Activated CD4-positive, alpha-beta T cell treated with anti-CD3 and anti-CD28 coated beads for 36 hours (primary cell): ENCODE measurements at regions of chr3 and their contacts with region 1.

Region 1: DNA sequence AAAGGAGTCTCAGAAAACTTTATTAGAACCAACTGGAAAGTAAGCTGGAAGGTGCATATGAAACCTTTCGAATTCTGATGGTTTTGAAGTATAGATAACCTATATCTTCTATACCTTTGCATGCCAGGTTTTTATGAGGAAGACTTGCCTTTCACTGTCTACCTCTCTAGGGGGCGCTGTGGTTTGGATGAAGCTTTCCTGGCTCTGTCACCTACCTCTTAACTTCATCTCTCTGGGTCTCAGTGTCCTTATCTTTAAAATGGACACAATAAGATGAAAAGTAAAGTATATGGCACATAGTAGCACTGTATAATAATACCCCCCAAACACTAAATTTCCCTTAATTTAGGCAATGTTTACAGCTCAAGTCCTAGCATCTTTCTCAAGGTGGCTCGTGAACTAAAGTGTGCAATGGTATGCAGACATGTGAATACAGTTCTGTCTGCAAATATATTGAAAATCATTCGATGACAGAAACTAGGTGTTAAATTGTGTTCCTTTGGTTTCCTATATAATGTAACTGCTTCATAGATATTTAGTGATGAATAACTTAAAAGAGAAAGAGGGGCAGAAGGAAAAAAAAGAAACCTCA is 314.3 kb downstream of the CHST2 start:
- DNase-seq: peak; percentile 63
- ATAC-seq: peak; percentile 53
- H3K4me3 Mint-ChIP-seq: no peak overlapping the region
- H3K27ac Mint-ChIP-seq: no peak overlapping the region
- H3K4me1 Mint-ChIP-seq: no peaks in the 10 kb centered on the region
- H3K27me3 Mint-ChIP-seq: no peaks in the 10 kb centered on the region

Region 2: GRCh38 chr3:142947799-142948575 is 485.9 kb before region 1 on chr3:
- CTCF ChIA-PET with region 1: no interaction called
- POLR2A ChIA-PET with region 1: no interaction called
- intact Hi-C with region 1: no loop called
- DNase-seq: peak; percentile 66
- ATAC-seq: peak; percentile 94
- H3K4me3 Mint-ChIP-seq: no peak overlapping the region
- H3K27ac Mint-ChIP-seq: no peak overlapping the region
- H3K4me1 Mint-ChIP-seq: peaks cover 19% of the 10 kb centered on the region
- H3K27me3 Mint-ChIP-seq: peaks cover 33% of the 10 kb centered on the region

Region 3: DNA sequence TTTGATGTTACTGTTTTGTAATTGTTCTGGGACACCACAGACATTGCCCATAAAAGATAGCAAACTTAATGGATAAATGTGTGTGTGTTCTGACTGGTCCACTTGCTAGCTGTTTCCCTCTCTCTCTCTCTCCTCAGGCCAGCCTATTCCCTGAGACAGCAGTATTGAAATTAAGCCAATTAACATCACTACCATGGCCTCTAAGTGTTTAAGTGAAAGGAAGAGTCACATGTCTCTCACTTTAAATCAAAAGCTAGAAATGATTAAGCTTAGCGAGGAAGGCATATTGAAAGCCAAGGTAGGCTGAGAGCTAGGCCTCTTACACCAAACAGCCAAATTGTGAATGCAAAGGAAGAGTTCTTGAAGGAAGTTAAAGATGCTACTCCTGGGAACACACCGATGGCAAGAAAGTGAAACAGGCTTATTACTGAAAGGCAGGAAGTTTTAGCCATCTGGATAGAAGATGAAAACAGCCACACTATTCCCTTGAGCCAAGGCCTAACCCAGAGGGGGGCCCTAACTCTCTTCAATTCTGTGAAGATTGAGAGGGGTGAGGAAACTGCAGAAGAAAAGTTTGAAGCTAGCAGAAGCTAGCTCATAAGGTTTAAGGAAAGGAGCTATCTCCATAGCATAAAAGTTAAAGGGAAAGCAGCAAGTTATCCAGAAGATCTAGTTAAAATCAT is 19.2 kb before region 1 on chr3:
- CTCF ChIA-PET with region 1: no interaction called
- POLR2A ChIA-PET with region 1: no interaction called
- intact Hi-C with region 1: no loop called
- DNase-seq: no peak
- ATAC-seq: peak; percentile 83
- H3K4me3 Mint-ChIP-seq: no peak overlapping the region
- H3K27ac Mint-ChIP-seq: no peak overlapping the region
- H3K4me1 Mint-ChIP-seq: peaks cover 7% of the 10 kb centered on the region
- H3K27me3 Mint-ChIP-seq: no peaks in the 10 kb centered on the region

Region 4: DNA sequence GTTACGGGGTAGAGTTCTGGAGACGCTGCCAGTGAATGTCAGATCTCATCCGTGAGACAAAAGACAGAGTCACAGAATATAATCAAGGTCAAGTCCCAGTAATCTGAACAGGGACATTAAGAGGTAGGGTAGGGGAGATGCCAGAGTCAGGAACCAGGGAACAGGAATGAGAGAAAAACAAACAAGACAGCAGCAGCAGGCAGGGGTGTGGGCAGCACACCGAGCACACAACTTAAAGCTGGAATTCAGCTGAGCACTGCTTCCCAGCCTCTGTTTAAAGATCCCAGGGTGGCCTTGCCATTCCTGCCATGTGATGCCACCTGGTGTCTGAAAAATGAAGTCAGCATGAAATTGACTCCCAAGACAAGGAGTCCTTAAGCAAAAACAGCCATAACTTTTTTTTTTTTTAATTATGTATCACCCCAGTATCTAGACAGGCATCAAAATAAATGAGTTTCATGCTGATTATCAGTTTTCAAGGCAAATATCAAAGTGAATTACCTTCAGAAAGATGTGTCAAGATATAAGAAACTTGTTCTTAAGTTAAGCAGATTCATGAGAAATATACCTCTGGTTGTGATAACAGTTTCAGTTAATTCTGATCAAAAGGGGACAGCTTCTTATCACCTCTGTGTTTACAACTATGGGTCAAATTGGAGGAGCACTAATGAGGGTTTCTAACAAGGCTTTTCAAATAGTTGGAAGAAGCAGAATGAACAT is 210.6 kb after region 1 on chr3:
- CTCF ChIA-PET with region 1: interaction called, 3 read pairs
- POLR2A ChIA-PET with region 1: no interaction called
- intact Hi-C with region 1: loop called (anchors 1 to 10 kb)
- DNase-seq: peak; percentile 45
- ATAC-seq: peak; percentile 33
- H3K4me3 Mint-ChIP-seq: no peak overlapping the region
- H3K27ac Mint-ChIP-seq: no peak overlapping the region
- H3K4me1 Mint-ChIP-seq: no peaks in the 10 kb centered on the region
- H3K27me3 Mint-ChIP-seq: no peaks in the 10 kb centered on the region